Activated naive CD4-positive, alpha-beta T cell treated with anti-CD3 and anti-CD28 coated beads, Interleukin-2, amount 10 ng/mL, durations not matched to agents 7 days and 5 days (primary cell): ENCODE measurements at regions of chr9 and their contacts with region 1.

Region 1: DNA sequence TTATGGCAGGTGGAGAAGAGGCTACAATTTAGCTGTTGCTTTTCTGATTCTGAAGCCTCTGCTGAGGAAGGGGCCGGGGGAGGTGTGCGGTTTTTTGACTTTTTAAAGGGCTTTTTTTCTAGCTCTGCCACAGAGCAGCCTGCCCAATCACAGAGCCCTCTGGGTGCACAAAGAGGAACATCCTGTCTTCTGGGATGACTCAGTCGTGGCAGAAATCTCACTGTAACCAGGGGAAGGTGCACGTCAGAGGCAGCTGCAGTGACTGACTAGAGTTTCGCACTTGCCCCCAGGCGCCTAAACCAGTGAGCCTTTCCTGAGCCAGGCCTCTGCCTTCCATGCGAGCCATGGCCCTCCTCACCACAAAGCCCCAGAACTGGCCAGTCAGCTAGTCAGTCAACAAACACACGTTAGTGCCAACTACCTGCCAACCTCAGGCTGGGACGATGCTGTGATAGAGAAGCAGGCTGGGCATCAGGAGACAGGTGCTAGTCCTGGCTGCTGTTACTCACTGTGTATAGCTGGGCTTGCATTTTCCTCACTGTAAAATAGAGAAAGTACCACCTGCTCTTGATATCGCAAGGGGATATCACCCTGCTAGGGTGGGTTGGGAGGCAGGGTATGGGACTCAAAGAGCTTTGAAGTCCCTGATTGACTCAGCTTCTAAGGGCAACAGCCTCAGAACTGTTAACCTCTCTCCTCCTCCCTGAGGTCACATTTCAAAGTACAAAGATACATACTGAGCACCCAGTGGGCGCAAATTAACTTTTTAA is 2.2 kb downstream of the AKNA start:
- DNase-seq: peak; percentile 94
- H3K4me3 Mint-ChIP-seq: peak overlapping the region; percentile 100
- H3K27ac Mint-ChIP-seq: peak overlapping the region; percentile 100
- H3K4me1 Mint-ChIP-seq: peaks cover 64% of the 10 kb centered on the region
- H3K27me3 Mint-ChIP-seq: no peaks in the 10 kb centered on the region

Region 2: DNA sequence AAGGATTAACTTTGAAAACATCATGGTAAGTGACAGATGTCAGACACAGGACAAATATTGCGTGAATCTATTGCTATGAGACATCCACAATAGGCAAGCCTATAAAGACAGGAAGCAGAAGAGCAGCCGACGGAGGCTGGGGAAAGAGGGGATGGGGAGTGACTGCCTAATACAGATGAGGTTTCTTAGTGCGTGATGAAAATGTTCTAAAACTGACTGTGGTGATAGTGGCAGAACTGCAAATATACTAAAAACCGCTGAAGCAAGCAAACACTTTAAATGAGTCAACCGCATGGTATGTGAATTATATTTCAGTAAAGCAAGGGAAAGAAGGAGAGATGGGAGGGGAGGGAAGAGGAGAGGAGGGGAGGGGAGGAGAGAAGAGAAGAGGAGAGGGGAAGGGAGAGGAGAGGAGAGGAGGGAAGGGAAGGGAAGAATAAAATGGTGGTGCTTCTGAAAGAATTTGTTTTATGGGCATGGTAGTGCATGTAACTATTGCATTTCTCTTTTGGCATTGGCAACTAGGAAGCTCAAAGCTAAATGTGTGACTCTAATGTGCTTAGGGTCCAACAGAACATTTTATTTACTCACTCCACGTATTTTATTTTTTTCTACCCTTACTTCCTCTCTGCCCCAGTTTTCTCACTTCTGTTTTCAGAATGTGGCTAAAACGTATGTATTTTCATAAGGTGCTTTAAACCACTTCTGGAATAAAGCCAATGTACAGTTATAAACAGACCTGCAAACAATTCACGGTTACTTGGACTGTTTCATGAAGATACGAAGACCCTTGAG is 19.1 kb before region 1 on chr9:
- CTCF ChIA-PET with region 1: interaction called, 65 read pairs
- DNase-seq: peak; percentile 57
- H3K4me3 Mint-ChIP-seq: peak overlapping the region; percentile 34
- H3K27ac Mint-ChIP-seq: peak overlapping the region; percentile 94
- H3K4me1 Mint-ChIP-seq: peaks cover 89% of the 10 kb centered on the region
- H3K27me3 Mint-ChIP-seq: no peaks in the 10 kb centered on the region

Region 3: GRCh38 chr9:114372921-114373448 is 12.6 kb before region 1 on chr9:
- CTCF ChIA-PET with region 1: interaction called, 65 read pairs
- DNase-seq: peak; percentile 94
- H3K4me3 Mint-ChIP-seq: peak overlapping the region; percentile 77
- H3K27ac Mint-ChIP-seq: peak overlapping the region; percentile 94
- H3K4me1 Mint-ChIP-seq: peaks cover 93% of the 10 kb centered on the region
- H3K27me3 Mint-ChIP-seq: no peaks in the 10 kb centered on the region

Region 4: DNA sequence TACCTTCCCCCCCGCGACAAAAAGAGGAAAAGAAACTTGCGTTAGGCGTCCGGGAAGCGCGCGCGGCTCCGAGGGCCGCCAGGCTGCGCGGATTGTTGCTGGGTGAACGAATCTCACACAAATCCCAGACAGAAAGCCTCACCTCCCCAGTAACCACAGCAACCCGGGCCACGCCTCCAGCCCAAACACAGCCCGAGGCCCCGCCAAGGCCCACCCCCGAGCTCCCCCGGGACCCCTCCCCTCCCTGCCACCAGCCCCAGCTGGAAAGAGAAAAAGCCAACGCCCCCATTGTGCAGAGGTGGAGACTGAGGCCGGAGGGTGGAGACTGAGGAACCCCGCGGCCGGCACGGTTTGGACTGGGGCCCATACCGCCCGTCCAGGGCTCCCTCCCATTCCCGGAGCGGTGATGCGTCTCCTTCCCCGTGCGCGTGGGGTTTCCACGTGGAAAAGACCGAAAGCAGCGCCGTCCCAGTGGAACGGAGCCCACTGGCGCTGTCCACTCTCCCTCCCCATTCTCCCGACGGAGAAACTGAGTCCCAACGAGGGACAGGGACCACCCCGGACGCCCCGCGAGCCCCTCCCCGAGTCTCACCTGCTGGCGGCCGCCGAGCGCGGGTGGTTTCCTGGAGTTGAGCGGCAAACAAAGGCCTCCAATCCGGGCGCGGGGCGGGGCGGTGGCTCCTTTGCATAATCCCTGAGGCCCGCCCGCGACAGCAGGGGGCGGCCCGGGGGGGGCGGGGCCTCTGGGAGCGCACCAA is 12.4 kb after region 1 on chr9:
- CTCF ChIA-PET with region 1: interaction called, 17 read pairs
- DNase-seq: peak; percentile 98
- H3K4me3 Mint-ChIP-seq: peak overlapping the region; percentile 89
- H3K27ac Mint-ChIP-seq: peak overlapping the region; percentile 90
- H3K4me1 Mint-ChIP-seq: peaks cover 51% of the 10 kb centered on the region
- H3K27me3 Mint-ChIP-seq: peaks cover 16% of the 10 kb centered on the region